Naive thymus-derived CD4-positive, alpha-beta T cell (primary cell): ENCODE measurements at regions of chr12 and their contacts with region 1.

Region 1: GRCh38 chr12:119988782-119989668 is at the start of gene BICDL1:
- DNase-seq: peak; percentile 95 to 99 (median 98)
- ATAC-seq: peak; percentile 93
- H3K4me3 ChIP-seq: peak within 1 kb of the TSS; percentile 68
- H3K4me3 Mint-ChIP-seq: peak within 1 kb of the TSS; percentile 78 to 95 (median 87)
- H3K27ac ChIP-seq: peak within 1 kb of the TSS; percentile 90
- H3K27ac Mint-ChIP-seq: peak within 1 kb of the TSS; percentile 69 to 98 (median 93)
- H3K4me1 ChIP-seq: peaks cover 18 to 19% of the 10 kb centered on the region in 2 donors
- H3K4me1 Mint-ChIP-seq: peaks cover 18 to 46% (median 38%) of the 10 kb centered on the region in 7 donors
- H3K27me3 ChIP-seq: no peaks in the 10 kb centered on the region
- H3K27me3 Mint-ChIP-seq: peaks cover 0 to 9% (median 0%) of the 10 kb centered on the region in 5 donors
- total RNA-seq, gene BICDL1: 75.8 to 156 (median 143) TPM

Region 2: GRCh38 chr12:119876761-119877638 is 112.0 kb before region 1 on chr12 and contains the start of gene CIT:
- CTCF ChIA-PET with region 1: no interaction called
- POLR2A ChIA-PET with region 1: no interaction called
- intact Hi-C with region 1: loop called in 1 of 2 experiments (anchors 2 kb)
- DNase-seq: peak; percentile 71 to 86 (median 81)
- ATAC-seq: peak; percentile 100
- H3K4me3 ChIP-seq: peak within 1 kb of the TSS; percentile 86
- H3K4me3 Mint-ChIP-seq: peak within 1 kb of the TSS; percentile 78 to 97 (median 88)
- H3K27ac ChIP-seq: peak within 1 kb of the TSS; percentile 58
- H3K27ac Mint-ChIP-seq: peak within 1 kb of the TSS in 8 of 9 donors; percentile 5 to 83 (median 37)
- H3K4me1 ChIP-seq: no peaks in the 10 kb centered on the region
- H3K4me1 Mint-ChIP-seq: peaks cover 10 to 27% (median 15%) of the 10 kb centered on the region in 7 donors
- H3K27me3 ChIP-seq: no peaks in the 10 kb centered on the region
- H3K27me3 Mint-ChIP-seq: peaks cover 0 to 14% (median under 1%) of the 10 kb centered on the region in 5 donors
- total RNA-seq, gene CIT: 1.6 to 69.9 (median 3.6) TPM

Region 3: GRCh38 chr12:120012067-120012621 is 23.1 kb after region 1 on chr12:
- CTCF ChIA-PET with region 1: interaction called, 6 read pairs
- POLR2A ChIA-PET with region 1: interaction called, 96 read pairs
- intact Hi-C with region 1: loop called (anchors 1 kb)
- DNase-seq: peak in 8 of 9 donors; percentile 31 to 98 (median 74)
- ATAC-seq: peak; percentile 78
- H3K4me3 ChIP-seq: peak overlapping the region; percentile 33
- H3K4me3 Mint-ChIP-seq: peak overlapping the region; percentile 8 to 86 (median 74)
- H3K27ac ChIP-seq: peak overlapping the region; percentile 93
- H3K27ac Mint-ChIP-seq: peak overlapping the region; percentile 93 to 100 (median 96)
- H3K4me1 ChIP-seq: peaks cover 73 to 79% of the 10 kb centered on the region in 2 donors
- H3K4me1 Mint-ChIP-seq: peaks cover 41 to 94% (median 82%) of the 10 kb centered on the region in 7 donors
- H3K27me3 ChIP-seq: no peaks in the 10 kb centered on the region
- H3K27me3 Mint-ChIP-seq: no peaks in the 10 kb centered on the region

Region 4: GRCh38 chr12:120041386-120042231 is 52.6 kb after region 1 on chr12:
- CTCF ChIA-PET with region 1: no interaction called
- POLR2A ChIA-PET with region 1: interaction called, 3 read pairs
- intact Hi-C with region 1: loop called in 1 of 2 experiments (anchors 2 kb)
- DNase-seq: peak in 7 of 9 donors; percentile 26 to 65 (median 61)
- ATAC-seq: peak; percentile 92
- H3K4me3 ChIP-seq: no peak overlapping the region
- H3K4me3 Mint-ChIP-seq: peak overlapping the region; percentile 7 to 85 (median 63)
- H3K27ac ChIP-seq: peak overlapping the region; percentile 57
- H3K27ac Mint-ChIP-seq: peak overlapping the region; percentile 21 to 96 (median 88)
- H3K4me1 ChIP-seq: no peaks in the 10 kb centered on the region
- H3K4me1 Mint-ChIP-seq: peaks cover 11 to 40% (median 22%) of the 10 kb centered on the region in 7 donors
- H3K27me3 ChIP-seq: no peaks in the 10 kb centered on the region
- H3K27me3 Mint-ChIP-seq: no peaks in the 10 kb centered on the region

Region 5: GRCh38 chr12:120249875-120250795 is 261.1 kb after region 1 on chr12:
- CTCF ChIA-PET with region 1: no interaction called
- POLR2A ChIA-PET with region 1: no interaction called
- intact Hi-C with region 1: loop called in 1 of 2 experiments (anchors 5 kb)
- DNase-seq: peak in 1 of 9 donors; percentile 37
- ATAC-seq: no peak
- H3K4me3 ChIP-seq: peak overlapping the region; percentile 46
- H3K4me3 Mint-ChIP-seq: peak overlapping the region; percentile 74 to 86 (median 84)
- H3K27ac ChIP-seq: peak overlapping the region; percentile 55
- H3K27ac Mint-ChIP-seq: peak overlapping the region; percentile 88 to 99 (median 96)
- H3K4me1 ChIP-seq: peaks cover 71 to 82% of the 10 kb centered on the region in 2 donors
- H3K4me1 Mint-ChIP-seq: peaks cover 68 to 92% (median 81%) of the 10 kb centered on the region in 7 donors
- H3K27me3 ChIP-seq: no peaks in the 10 kb centered on the region
- H3K27me3 Mint-ChIP-seq: no peaks in the 10 kb centered on the region